GM18951 (cell line): ENCODE measurements at regions of chr1 and their contacts with region 1.

Region 1: DNA sequence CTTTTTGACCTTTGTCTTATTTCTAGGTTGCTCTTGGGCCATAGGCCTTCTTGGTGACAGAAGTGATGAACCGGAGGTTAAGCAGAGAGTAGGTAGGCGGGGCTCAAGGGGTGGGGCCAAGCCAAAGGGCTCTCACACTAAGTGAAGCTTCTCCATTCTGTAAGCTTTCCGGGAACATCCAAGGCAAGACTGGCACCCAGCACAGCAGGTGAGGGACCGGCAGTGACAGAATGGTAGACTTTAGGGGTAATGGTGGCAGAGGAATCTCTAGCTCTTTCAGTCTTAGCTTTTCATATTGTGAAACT is at the start of gene TNFAIP8L2:
- POLR2A ChIP-seq: peak; percentile 39

Region 2: DNA sequence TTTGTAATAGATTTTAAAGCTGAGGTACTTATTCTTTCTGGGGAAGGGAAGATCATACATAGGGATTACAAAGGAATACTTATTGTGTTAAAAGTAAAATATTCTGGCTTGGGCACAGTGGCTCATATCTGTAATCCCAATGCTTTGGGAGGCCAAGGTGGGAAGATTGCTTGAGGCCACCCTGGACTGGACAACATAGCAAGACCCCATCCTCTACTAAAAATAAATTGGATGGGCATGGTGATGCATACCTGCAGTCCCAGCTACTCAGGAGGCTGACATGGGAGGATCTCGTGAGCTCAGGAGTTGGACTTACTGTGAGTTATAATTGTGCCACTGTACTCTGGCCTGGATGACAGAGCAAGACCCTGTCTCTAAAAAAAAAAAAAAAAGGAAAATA is 58.3 kb before region 1 on chr1:
- in situ Hi-C with region 1: loop called (anchors 5 kb)
- POLR2A ChIP-seq: no peak

Region 3: GRCh38 chr1:151340870-151341754 is 184.6 kb after region 1 on chr1:
- in situ Hi-C with region 1: no loop called
- POLR2A ChIP-seq: peak; percentile 1